Activated T-helper 1 cell treated with anti-CD3 and anti-CD28 coated beads, Interleukin-12 subunit alpha, Interleukin-12 subunit beta, Interleukin-2, Interleukin-4 antibody, amounts not matched to agents 30 ng/mL and 10 ng/mL and 1 ng/mL, durations not matched to agents 14 hours and 24 hours and 36 hours (primary cell): ENCODE measurements at regions of chr6 and their contacts with region 1.

Region 1: DNA sequence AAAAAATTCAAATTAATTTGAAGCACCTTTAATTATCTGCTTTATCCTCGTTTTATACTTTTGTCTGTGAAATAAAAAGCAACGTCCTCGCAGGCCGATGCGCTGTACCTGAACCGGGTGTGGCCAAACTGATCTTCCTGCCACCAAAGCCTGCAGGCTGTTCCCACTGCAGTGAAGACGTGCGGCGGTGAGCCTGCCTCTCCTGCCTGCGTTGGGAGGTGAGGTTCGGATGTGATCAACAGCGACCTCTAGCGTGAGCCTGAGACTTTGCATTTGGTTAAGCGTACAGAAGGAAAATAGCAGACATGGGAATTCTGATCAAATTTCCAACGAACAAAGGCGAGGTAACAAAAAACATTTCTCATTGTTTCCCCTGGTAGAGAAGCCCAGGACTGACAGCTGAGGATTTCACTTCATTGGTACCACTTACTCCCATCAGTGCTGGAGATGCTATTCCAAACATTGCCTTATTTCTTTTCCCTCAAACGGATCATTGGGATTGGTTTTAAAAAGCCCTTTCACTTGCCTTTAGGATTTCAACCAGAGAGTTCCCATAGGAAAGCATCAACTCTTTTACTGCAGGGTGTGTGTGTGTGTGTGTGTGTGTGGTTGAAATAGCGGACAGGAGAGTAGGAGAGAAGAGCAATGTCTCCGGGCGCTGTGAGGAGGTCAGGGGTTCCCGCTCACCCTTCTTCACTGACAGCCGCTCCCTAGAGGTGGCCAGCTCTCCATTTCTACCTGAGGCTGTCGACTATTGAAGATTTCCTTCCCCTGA is 56.6 kb upstream of the CCN6 start:
- DNase-seq: peak; percentile 68
- H3K4me3 Mint-ChIP-seq: peak overlapping the region; percentile 45
- H3K27ac Mint-ChIP-seq: peak overlapping the region; percentile 46
- H3K4me1 Mint-ChIP-seq: peaks cover 46% of the 10 kb centered on the region
- H3K27me3 Mint-ChIP-seq: no peaks in the 10 kb centered on the region

Region 2: GRCh38 chr6:112010328-112010727 is 13.1 kb after region 1 on chr6:
- intact Hi-C with region 1: loop called (anchors 2 kb)
- DNase-seq: no peak
- H3K4me3 Mint-ChIP-seq: no peak overlapping the region
- H3K27ac Mint-ChIP-seq: no peak overlapping the region
- H3K4me1 Mint-ChIP-seq: peaks cover 29% of the 10 kb centered on the region
- H3K27me3 Mint-ChIP-seq: no peaks in the 10 kb centered on the region

Region 3: DNA sequence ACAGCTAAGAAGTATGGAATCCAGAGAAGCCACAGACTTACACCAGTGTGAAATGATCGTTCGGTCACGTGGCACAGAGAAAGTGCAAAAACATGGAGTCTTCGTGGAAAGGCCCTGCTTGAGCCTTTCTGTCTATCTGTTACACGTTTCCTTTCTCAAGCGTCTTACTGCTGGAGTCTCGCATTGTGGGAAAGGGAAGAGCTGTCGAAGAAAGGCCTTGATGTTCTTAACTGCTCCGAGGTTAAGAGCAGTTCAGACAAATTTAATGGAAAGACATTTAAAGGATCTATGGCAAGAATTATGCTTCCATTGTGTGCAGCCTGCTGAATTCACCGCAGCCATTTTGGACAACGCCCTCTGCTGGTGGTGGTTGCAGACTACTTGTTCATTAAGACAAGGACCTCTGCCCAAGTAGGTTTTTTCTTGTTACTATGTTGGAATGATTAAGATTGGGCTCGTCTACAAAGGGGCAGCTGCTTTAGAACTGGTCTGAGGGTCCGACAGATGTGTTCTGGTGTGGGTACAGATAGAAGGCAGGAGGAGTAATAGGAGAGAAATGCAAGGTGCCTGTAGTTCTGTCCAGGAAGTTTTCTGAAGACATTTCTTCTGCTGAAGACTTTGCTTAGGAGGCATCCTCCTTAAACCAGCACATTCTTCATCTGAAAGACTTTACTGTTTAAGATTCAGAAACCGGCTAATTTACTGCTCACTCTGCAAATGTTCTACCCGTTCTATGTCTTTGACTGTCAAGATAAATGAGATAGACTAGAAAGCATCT is 32.0 kb after region 1 on chr6:
- intact Hi-C with region 1: loop called (anchors 2 kb)
- DNase-seq: peak; percentile 51
- H3K4me3 Mint-ChIP-seq: no peak overlapping the region
- H3K27ac Mint-ChIP-seq: peak overlapping the region; percentile 68
- H3K4me1 Mint-ChIP-seq: peaks cover 74% of the 10 kb centered on the region
- H3K27me3 Mint-ChIP-seq: no peaks in the 10 kb centered on the region